Endothelial cell of umbilical vein (primary cell): ENCODE measurements at regions of chr6 and their contacts with region 1.

Region 1: DNA sequence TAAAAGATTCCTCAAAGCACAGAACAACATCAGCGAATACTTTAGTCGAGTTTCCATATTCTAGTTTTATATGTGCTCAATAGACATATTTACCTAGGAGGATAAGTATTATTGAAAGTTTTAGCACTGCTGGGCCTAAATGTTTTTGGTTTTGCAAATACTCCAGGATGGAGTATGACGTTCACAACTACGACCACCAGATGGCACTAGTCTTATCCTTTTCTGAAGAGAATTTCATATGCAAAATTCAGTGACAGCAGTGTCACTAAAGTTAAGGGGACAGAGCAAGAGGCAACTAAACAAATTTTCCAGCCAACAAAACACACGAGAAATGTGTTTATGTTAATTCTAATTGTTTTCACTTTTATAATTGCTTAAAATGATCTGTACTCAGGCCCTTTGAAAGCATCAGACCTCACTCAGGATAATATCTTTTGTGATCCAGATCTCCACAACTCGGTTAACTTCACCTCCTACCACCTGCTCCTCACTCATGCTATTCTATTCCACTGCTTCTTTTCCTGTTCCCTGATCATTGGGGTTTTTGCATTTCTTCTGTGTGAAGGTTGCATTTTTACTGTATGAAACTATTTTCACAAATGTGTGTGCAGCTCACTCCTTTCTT is 220.8 kb downstream of the TRDN start:
- DNase-seq: peak; percentile 56
- H3K4me3 ChIP-seq: no peak overlapping the region
- H3K27ac ChIP-seq: no peak overlapping the region
- H3K4me1 ChIP-seq: no peaks in the 10 kb centered on the region
- H3K27me3 ChIP-seq: peaks cover 2 to 6% of the 10 kb centered on the region in 2 experiments
- CTCF ChIP-seq: peak; percentile 50 to 54
- POLR2A ChIP-seq: no peak

Region 2: GRCh38 chr6:123393328-123393727 is 22.6 kb before region 1 on chr6:
- CTCF ChIA-PET with region 1: interaction called, 3 read pairs
- POLR2A ChIA-PET with region 1: no interaction called
- dilution Hi-C with region 1: no loop called
- intact Hi-C with region 1: loop called (anchors 2 kb)
- DNase-seq: peak; percentile 12
- H3K4me3 ChIP-seq: no peak overlapping the region
- H3K27ac ChIP-seq: no peak overlapping the region
- H3K4me1 ChIP-seq: no peaks in the 10 kb centered on the region
- H3K27me3 ChIP-seq: no peaks in the 10 kb centered on the region
- CTCF ChIP-seq: no peak
- POLR2A ChIP-seq: no peak

Region 3: GRCh38 chr6:123636782-123637181 is 220.8 kb after region 1 on chr6 and contains the start of gene TRDN:
- CTCF ChIA-PET with region 1: no interaction called
- POLR2A ChIA-PET with region 1: no interaction called
- dilution Hi-C with region 1: no loop called
- intact Hi-C with region 1: no loop called
- DNase-seq: no peak
- H3K4me3 ChIP-seq: no peak within 1 kb of the TSS
- H3K27ac ChIP-seq: no peak within 1 kb of the TSS
- H3K4me1 ChIP-seq: no peaks in the 10 kb centered on the region
- H3K27me3 ChIP-seq: no peaks in the 10 kb centered on the region
- CTCF ChIP-seq: no peak
- POLR2A ChIP-seq: no peak
- total RNA-seq, gene TRDN: not detected in 2 replicates